ENCODE measurements at regions of chr20 and their contacts with region 1.

Region 1: DNA sequence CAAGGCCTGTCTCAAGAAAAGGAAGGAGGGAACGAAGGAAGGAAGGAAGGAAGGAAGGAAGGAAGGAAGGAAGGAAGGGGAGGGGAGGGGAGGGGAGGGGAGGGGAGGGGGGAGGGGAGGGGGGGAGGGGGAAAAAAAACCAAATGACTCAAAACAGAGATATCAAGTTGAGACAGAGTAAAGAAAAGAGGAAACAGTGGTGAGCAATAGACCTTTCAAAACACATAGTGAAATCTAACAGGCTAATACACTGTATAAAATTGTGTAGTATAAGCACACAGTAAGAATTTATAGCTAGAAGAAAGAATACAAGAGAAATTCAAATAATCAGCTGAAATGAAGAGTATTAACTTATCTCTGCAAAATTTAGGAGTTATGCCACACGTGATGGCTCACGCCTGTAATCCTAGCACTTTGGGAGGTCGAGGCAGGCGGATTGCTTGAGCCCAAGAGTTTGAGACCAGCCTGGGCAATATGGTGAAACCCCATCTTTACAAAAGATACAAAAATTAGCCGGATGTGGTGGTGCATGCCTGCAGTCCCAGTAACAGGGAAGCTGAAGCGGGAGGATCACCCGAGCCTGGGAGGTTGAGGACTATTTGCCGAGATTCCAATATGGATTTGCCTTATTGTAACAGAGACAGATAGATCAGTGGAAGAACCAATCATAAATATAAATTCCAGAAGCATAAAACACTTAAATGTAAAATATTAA is 123.2 kb downstream of the PRND start:
- H3K4me3 Mint-ChIP-seq: no peak overlapping the region
- H3K27ac Mint-ChIP-seq: peak overlapping the region; percentile 69
- H3K4me1 Mint-ChIP-seq: peaks cover 28% of the 10 kb centered on the region
- H3K27me3 Mint-ChIP-seq: peaks cover 2% of the 10 kb centered on the region

Region 2: GRCh38 chr20:4358552-4358951 is 486.4 kb before region 1 on chr20:
- intact Hi-C with region 1: no loop called
- H3K4me3 Mint-ChIP-seq: no peak overlapping the region
- H3K27ac Mint-ChIP-seq: no peak overlapping the region
- H3K4me1 Mint-ChIP-seq: no peaks in the 10 kb centered on the region
- H3K27me3 Mint-ChIP-seq: peaks cover 10% of the 10 kb centered on the region

Region 3: DNA sequence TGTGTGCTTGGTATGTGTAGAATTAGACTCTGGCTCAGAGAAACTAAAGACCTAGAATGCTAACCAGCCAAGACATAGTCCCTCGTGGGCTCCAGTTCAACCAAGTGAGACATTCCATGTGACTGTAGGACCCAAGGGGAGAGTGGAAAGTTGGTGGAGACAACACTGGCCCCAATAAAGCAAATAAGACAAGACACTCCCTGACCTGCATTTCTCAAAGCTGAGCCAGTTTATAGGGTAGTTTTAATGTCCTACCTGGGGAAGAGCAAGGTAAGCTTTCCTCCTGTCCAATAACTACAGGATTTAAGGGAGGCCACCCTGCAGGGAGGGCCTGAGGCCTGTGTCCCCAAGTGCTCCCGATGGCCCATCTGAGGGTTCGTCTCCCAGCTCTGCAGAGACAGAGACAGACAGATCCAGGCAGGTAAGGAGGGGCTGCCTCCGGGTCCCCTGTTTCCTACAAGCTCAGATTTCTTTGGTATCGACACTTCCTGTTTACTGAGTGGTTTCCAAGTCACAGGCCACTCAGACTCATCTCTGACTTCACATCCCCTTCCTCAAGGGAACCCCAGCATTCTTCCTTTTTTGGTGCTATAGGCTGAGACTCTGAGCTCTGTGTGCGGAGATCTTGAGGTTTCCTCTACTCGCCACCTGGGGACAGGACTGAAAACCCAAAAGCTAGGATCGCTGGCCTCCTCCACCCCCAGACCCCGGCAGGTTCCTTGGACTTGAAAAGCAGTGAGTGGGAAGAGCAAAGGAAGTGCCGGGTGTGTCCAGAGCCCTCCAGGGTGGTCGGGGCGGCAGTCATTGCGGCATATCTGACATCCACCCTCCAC is 30.8 kb before region 1 on chr20:
- intact Hi-C with region 1: loop called (anchors 5 kb)
- H3K4me3 Mint-ChIP-seq: peak overlapping the region; percentile 90
- H3K27ac Mint-ChIP-seq: peak overlapping the region; percentile 100
- H3K4me1 Mint-ChIP-seq: peaks cover 98% of the 10 kb centered on the region
- H3K27me3 Mint-ChIP-seq: no peaks in the 10 kb centered on the region

Region 4: GRCh38 chr20:4829514-4830215 is 15.2 kb before region 1 on chr20:
- intact Hi-C with region 1: no loop called
- H3K4me3 Mint-ChIP-seq: no peak overlapping the region
- H3K27ac Mint-ChIP-seq: peak overlapping the region; percentile 85
- H3K4me1 Mint-ChIP-seq: peaks cover 43% of the 10 kb centered on the region
- H3K27me3 Mint-ChIP-seq: no peaks in the 10 kb centered on the region

Measured in dendritic cell treated with granulocyte-macrophage colony-stimulating factor and Interleukin-4, amounts not matched to agents 40 ng/mL and 50 ng/mL, for 4 days (primary cell).